GM12878 (cell line): ENCODE measurements at regions of chr1 and their contacts with region 1.

Region 1: DNA sequence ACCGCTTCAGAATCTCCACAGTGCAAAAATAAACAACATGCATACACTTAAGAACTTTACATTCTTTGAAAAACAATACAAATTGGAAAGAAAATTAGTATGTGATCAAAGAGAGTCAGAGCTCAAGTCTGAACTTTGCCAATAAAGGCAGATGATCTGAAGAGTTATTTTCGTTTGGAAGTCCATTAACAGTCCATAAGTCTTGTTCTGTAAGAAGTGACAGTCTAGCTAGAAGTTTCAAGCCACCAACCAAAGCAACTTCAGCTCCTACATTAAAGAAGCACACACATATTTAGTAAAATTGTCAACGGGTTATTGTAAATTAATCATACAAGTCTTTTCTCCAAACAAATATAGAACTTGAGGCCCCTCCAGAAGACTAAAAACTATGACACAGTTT is 20.7 kb downstream of the ANGEL2 start:
- DNase-seq: no peak
- ATAC-seq: no peak
- H3K4me3 ChIP-seq: no peak overlapping the region
- H3K27ac ChIP-seq: no peak overlapping the region
- H3K4me1 ChIP-seq: no peaks in the 10 kb centered on the region
- H3K27me3 ChIP-seq: no peaks in the 10 kb centered on the region
- CTCF ChIP-seq: no peak
- EP300 ChIP-seq: no peak
- POLR2A ChIP-seq: no peak
- RAD21 ChIP-seq: no peak

Region 2: DNA sequence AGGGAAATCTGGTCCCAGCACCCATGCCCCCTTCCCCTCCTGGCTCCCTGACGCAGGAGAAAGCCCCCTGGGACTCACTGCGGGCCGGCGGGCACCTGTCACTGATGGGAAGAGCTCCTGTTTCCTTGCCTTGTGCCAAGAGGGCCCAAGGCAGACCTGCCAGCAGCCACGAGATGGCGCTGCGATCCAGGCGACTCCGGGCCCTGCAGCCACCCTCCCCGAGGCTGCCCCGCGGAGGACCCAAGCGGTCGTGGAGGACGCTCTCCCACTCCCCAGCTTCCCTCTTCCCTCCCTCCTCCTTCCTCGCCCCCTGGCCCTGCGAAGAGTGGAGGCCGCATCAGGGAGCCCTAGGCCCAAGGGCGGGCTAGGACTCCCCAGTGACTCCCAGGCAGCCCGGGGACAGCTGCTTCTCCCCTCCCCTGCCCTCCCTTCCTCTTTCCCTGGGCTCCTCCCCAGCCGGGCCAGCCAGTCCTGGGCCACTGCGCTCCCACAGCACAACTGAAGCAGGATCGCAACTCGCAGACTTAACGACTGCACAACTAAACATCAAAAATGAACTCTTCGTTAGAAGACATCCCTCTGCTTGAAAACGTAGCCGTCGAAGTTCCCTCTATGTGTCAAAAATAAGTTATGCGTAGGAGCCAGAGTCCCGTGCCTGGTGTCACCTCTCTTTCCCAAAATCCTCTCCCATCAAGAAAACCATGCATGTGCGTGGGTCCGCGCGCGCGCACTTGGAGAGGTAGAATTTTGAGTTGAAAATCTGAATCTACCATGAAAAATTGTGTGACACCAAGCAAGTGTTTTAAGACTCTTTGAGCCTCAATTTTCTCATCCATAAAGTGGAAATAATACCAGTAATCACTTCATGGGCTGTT is 329.4 kb before region 1 on chr1:
- CTCF ChIA-PET with region 1: interaction called, 61 read pairs
- POLR2A ChIA-PET with region 1: no interaction called
- RAD21 ChIA-PET with region 1: interaction called, 22 read pairs
- SMC1A ChIA-PET with region 1: interaction called, 44 read pairs
- in situ Hi-C with region 1: loop called (anchors 5 kb)
- intact Hi-C with region 1: loop called (anchors 1 kb)
- DNase-seq: no peak
- ATAC-seq: peak; percentile 98
- H3K4me3 ChIP-seq: peak overlapping the region; percentile 64
- H3K27ac ChIP-seq: peak overlapping the region; percentile 33; the same call in 1 of the 2 replicates
- H3K4me1 ChIP-seq: peaks cover 24% of the 10 kb centered on the region
- H3K27me3 ChIP-seq: no peaks in the 10 kb centered on the region
- CTCF ChIP-seq: peak; percentile 90 to 98 (median 94)
- EP300 ChIP-seq: no peak
- POLR2A ChIP-seq: no peak
- RAD21 ChIP-seq: peak; percentile 94

Region 3: DNA sequence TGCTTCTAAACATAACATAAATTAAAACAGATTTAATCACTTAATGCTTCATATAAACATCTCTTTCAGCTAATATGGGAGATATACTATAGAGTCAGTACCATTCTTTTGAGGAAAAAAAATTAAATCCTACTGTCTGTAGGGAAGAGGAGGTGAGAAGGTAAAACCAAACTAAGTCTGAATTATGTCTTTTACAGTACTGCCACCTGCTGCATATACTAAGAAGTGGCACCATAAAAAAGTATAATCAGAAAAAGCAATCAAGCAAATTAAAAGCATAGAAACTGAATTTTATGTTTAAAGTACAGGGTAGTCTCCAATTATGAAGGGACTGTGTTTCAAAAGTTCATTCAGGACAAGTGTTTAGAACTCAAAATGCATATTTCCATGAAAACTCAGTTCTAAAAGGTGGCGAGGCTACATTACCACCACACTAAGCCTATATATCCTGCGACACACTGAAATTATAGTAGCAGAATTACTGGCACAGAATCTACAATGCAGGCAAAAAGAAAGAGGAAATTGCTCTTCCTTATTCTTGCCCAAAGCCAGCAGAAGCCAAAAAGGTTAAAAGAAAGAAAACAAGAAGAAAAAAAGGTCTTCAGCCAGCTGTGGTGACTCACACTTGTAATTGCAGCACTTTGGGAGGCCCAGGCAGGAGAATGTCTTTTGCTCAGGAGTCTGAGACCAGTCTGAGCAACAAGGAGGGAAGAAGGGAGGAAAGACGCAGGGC is 212.3 kb before region 1 on chr1:
- CTCF ChIA-PET with region 1: interaction called, 20 read pairs
- POLR2A ChIA-PET with region 1: interaction called, 4 read pairs
- RAD21 ChIA-PET with region 1: interaction called, 6 read pairs
- SMC1A ChIA-PET with region 1: interaction called, 11 read pairs
- in situ Hi-C with region 1: no loop called
- intact Hi-C with region 1: no loop called
- DNase-seq: no peak
- ATAC-seq: peak; percentile 68
- H3K4me3 ChIP-seq: no peak overlapping the region
- H3K27ac ChIP-seq: no peak overlapping the region
- H3K4me1 ChIP-seq: peaks cover 10% of the 10 kb centered on the region; the same call in 1 of the 2 replicates
- H3K27me3 ChIP-seq: no peaks in the 10 kb centered on the region
- CTCF ChIP-seq: peak; percentile 53 to 71 (median 64); a peak in 5 of 6 replicates
- EP300 ChIP-seq: no peak
- POLR2A ChIP-seq: no peak
- RAD21 ChIP-seq: peak; percentile 81

Region 4: DNA sequence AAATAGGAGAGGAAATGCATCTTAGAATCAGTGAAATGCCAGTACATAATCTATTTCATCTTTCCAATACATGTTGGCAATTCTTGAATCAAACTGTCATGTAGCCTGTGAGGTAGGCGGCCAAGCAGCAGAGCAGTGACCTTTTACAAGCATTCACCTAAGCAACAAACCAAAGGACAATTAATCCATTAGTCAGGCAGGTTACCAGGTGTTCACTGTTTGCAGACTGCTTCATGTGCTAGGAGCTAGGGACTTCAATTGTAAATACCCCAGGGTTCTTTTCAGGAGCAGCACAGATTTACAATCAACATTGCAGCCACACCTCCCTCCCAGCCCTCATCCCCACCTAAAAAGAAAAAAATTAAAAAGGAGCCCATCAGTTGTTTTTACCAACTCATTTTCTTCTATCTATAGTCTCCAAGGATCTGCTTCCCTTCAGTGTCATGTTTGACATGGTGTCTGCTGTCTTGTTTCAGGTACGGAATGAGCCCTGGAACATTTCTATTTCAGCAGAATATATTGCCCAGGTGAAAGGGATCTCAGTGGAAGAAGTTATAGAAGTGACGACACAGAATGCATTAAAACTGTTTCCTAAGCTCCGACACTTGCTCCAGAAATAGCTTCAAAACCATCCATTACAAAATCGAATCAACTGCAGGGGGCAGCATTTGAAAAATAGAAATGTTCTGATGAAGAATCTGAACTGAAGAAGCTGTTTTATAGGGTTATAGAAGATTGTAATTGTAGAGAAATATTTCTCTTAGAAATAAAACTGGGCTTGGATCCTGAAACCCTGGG is 180.2 kb before region 1 on chr1:
- CTCF ChIA-PET with region 1: interaction called, 105 read pairs
- POLR2A ChIA-PET with region 1: interaction called, 3 read pairs
- RAD21 ChIA-PET with region 1: interaction called, 60 read pairs
- SMC1A ChIA-PET with region 1: interaction called, 73 read pairs
- in situ Hi-C with region 1: loop called (anchors 5 kb)
- intact Hi-C with region 1: loop called (anchors 1 kb)
- DNase-seq: no peak
- ATAC-seq: no peak
- H3K4me3 ChIP-seq: no peak overlapping the region
- H3K27ac ChIP-seq: no peak overlapping the region
- H3K4me1 ChIP-seq: no peaks in the 10 kb centered on the region; the same call in 1 of the 2 replicates
- H3K27me3 ChIP-seq: no peaks in the 10 kb centered on the region
- CTCF ChIP-seq: peak; percentile 30 to 44 (median 36); a peak in 4 of 6 replicates
- EP300 ChIP-seq: no peak
- POLR2A ChIP-seq: no peak
- RAD21 ChIP-seq: peak; percentile 60

Region 5: GRCh38 chr1:212899845-212900244 is 95.1 kb before region 1 on chr1:
- CTCF ChIA-PET with region 1: interaction called, 4 read pairs
- POLR2A ChIA-PET with region 1: no interaction called
- RAD21 ChIA-PET with region 1: interaction called, 3 read pairs
- SMC1A ChIA-PET with region 1: interaction called, 6 read pairs
- in situ Hi-C with region 1: no loop called
- intact Hi-C with region 1: loop called (anchors 5 kb)
- DNase-seq: no peak
- ATAC-seq: no peak
- H3K4me3 ChIP-seq: no peak overlapping the region
- H3K27ac ChIP-seq: no peak overlapping the region
- H3K4me1 ChIP-seq: no peaks in the 10 kb centered on the region
- H3K27me3 ChIP-seq: no peaks in the 10 kb centered on the region
- CTCF ChIP-seq: no peak
- EP300 ChIP-seq: no peak
- POLR2A ChIP-seq: no peak
- RAD21 ChIP-seq: no peak

Region 6: GRCh38 chr1:212959266-212960220 is 35.4 kb before region 1 on chr1:
- CTCF ChIA-PET with region 1: interaction called, 33 read pairs
- POLR2A ChIA-PET with region 1: no interaction called
- RAD21 ChIA-PET with region 1: interaction called, 19 read pairs
- SMC1A ChIA-PET with region 1: interaction called, 24 read pairs
- in situ Hi-C with region 1: no loop called
- intact Hi-C with region 1: loop called (anchors 5 kb)
- DNase-seq: peak; percentile 79
- ATAC-seq: peak; percentile 77
- H3K4me3 ChIP-seq: peak overlapping the region; percentile 37; the same call in 1 of the 2 replicates
- H3K27ac ChIP-seq: peak overlapping the region; percentile 91
- H3K4me1 ChIP-seq: peaks cover 75% of the 10 kb centered on the region
- H3K27me3 ChIP-seq: no peaks in the 10 kb centered on the region
- CTCF ChIP-seq: no peak
- EP300 ChIP-seq: no peak
- POLR2A ChIP-seq: no peak
- RAD21 ChIP-seq: no peak

Region 7: GRCh38 chr1:213008564-213008963 is 13.6 kb after region 1 on chr1:
- CTCF ChIA-PET with region 1: interaction called, 38 read pairs
- POLR2A ChIA-PET with region 1: interaction called, 5 read pairs
- RAD21 ChIA-PET with region 1: interaction called, 8 read pairs
- SMC1A ChIA-PET with region 1: interaction called, 23 read pairs
- in situ Hi-C with region 1: no loop called
- intact Hi-C with region 1: no loop called
- DNase-seq: peak; percentile 17
- ATAC-seq: peak; percentile 92
- H3K4me3 ChIP-seq: no peak overlapping the region
- H3K27ac ChIP-seq: no peak overlapping the region
- H3K4me1 ChIP-seq: peaks cover 7% of the 10 kb centered on the region
- H3K27me3 ChIP-seq: no peaks in the 10 kb centered on the region
- CTCF ChIP-seq: no peak
- EP300 ChIP-seq: no peak
- POLR2A ChIP-seq: no peak
- RAD21 ChIP-seq: no peak

Region 8: DNA sequence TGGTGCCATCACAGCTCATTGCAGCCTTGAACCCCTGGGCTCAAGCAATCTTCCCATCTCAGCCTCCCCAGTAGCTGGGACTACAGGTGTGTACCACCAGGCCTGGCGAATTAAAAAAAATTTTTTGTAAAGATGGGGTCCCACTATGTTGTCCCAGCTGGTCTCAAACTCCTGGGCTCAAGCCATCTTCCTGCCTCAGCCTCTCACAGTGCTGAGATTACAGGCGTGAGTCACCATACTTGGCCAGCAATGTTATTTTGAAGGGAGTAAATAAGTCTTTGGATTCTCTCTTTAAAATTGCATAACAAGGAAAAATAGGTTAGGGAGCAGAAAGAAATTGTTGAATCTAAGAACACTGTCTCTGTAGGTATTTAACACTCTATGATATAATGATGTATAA is 167.4 kb after region 1 on chr1:
- CTCF ChIA-PET with region 1: no interaction called
- POLR2A ChIA-PET with region 1: no interaction called
- RAD21 ChIA-PET with region 1: no interaction called
- SMC1A ChIA-PET with region 1: no interaction called
- in situ Hi-C with region 1: no loop called
- intact Hi-C with region 1: no loop called
- DNase-seq: no peak
- ATAC-seq: no peak
- H3K4me3 ChIP-seq: no peak overlapping the region
- H3K27ac ChIP-seq: no peak overlapping the region
- H3K4me1 ChIP-seq: no peaks in the 10 kb centered on the region
- H3K27me3 ChIP-seq: no peaks in the 10 kb centered on the region
- CTCF ChIP-seq: no peak
- EP300 ChIP-seq: no peak
- POLR2A ChIP-seq: no peak
- RAD21 ChIP-seq: no peak